ENCODE measurements at regions of chr19 and their contacts with region 1.

Region 1: DNA sequence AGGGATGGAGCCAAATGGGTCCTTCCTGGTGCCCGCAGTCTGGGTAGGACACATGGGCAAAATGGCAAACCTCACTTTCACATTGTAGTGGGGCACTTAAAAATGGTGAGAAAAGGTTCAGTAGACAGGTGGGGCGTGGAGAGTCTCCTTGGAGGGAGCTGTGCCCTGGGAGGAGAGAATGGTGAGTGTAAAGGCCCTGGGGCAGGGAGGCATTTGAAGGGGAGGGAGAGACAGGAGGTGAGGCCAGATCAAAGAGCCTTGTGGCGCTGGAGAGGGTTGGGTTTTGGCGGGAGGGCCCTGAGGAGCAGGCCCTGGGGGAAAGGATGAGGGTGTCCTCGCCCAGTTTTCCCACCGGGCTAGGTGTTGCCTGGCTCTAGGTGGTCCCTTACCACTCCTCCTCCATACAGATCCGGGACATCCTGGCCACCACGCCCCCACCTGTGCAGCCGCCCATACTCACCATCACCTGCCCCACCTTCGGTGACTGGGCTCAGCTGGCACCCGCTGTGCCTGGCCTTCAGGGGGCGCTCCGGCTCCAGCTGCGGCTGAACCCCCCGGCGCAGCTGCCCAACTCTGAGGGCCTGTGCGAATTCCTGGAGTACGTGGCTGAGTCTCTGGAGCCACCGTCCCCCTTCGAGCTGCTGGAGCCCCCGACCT is 6.3 kb downstream of the MAP1S start:
- DNase-seq: peak in 1 of 2 donors; percentile 37
- ATAC-seq: no peak
- H3K4me3 ChIP-seq: no peak overlapping the region
- H3K4me3 Mint-ChIP-seq: no peak overlapping the region
- H3K27ac ChIP-seq: no peak overlapping the region
- H3K27ac Mint-ChIP-seq: peak overlapping the region in 1 of 2 donors; percentile 33
- H3K4me1 ChIP-seq: peaks cover 19% of the 10 kb centered on the region
- H3K4me1 Mint-ChIP-seq: peaks cover 18 to 45% of the 10 kb centered on the region in 2 donors
- H3K27me3 ChIP-seq: no peaks in the 10 kb centered on the region
- H3K27me3 Mint-ChIP-seq: no peaks in the 10 kb centered on the region
- CTCF ChIP-seq: peak; percentile 16

Region 2: GRCh38 chr19:17648097-17648660 is 77.4 kb before region 1 on chr19:
- intact Hi-C with region 1: no loop called
- DNase-seq: no peak
- ATAC-seq: no peak
- H3K4me3 ChIP-seq: no peak overlapping the region
- H3K4me3 Mint-ChIP-seq: no peak overlapping the region
- H3K27ac ChIP-seq: no peak overlapping the region
- H3K27ac Mint-ChIP-seq: no peak overlapping the region
- H3K4me1 ChIP-seq: no peaks in the 10 kb centered on the region
- H3K4me1 Mint-ChIP-seq: no peaks in the 10 kb centered on the region
- H3K27me3 ChIP-seq: no peaks in the 10 kb centered on the region
- H3K27me3 Mint-ChIP-seq: no peaks in the 10 kb centered on the region
- CTCF ChIP-seq: no peak

Region 3: GRCh38 chr19:17766543-17767131 is 41.1 kb after region 1 on chr19:
- intact Hi-C with region 1: loop called (anchors 2 kb)
- DNase-seq: peak; percentile 50 to 55
- ATAC-seq: peak; percentile 65 to 79 (median 78)
- H3K4me3 ChIP-seq: no peak overlapping the region
- H3K4me3 Mint-ChIP-seq: no peak overlapping the region
- H3K27ac ChIP-seq: no peak overlapping the region
- H3K27ac Mint-ChIP-seq: no peak overlapping the region
- H3K4me1 ChIP-seq: peaks cover 12% of the 10 kb centered on the region
- H3K4me1 Mint-ChIP-seq: peaks cover 5 to 8% of the 10 kb centered on the region in 2 donors
- H3K27me3 ChIP-seq: no peaks in the 10 kb centered on the region
- H3K27me3 Mint-ChIP-seq: no peaks in the 10 kb centered on the region
- CTCF ChIP-seq: peak; percentile 57

Region 4: DNA sequence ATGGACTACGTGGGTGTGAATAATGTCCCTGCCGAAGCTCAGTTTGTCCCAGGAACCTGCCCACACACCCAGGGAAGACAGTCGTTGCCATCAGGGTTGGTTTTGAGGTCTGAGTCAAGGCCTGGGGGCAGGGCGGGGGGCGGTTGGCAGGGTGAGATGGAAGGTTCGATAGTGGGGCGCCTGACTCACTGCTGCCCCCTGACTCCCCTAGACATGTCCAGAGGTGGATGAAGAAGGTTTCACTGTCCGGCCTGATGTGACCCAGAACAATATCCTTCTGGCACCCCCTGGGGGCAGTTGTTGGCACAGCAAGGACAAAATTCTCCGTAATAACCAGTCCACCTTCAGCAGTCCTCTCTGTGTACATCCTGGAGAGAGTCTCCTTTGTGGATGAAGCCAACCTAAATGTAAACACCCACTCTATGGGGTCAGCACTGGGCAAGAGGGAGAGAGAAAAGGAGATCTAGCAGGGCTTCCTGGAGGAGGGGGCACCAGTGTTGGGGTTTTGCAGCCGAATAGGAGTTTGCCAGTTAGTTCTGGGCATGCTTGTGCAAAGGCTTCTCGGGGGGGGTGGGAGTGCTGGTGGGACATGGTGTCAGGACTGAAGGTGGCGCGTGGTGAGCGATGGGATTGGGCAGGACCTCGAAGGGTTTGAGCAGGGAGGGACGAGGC is 49.8 kb after region 1 on chr19:
- intact Hi-C with region 1: loop called (anchors 1 kb)
- DNase-seq: peak; percentile 33 to 55
- ATAC-seq: no peak
- H3K4me3 ChIP-seq: no peak overlapping the region
- H3K4me3 Mint-ChIP-seq: no peak overlapping the region
- H3K27ac ChIP-seq: peak overlapping the region; percentile 61
- H3K27ac Mint-ChIP-seq: no peak overlapping the region
- H3K4me1 ChIP-seq: peaks cover 15% of the 10 kb centered on the region
- H3K4me1 Mint-ChIP-seq: peaks cover 7 to 17% of the 10 kb centered on the region in 2 donors
- H3K27me3 ChIP-seq: no peaks in the 10 kb centered on the region
- H3K27me3 Mint-ChIP-seq: no peaks in the 10 kb centered on the region
- CTCF ChIP-seq: no peak

Measured in natural killer cell (primary cell).